ENCODE measurements at regions of chr1 and their contacts with region 1.

Region 1: GRCh38 chr1:146036965-146037646 is 15.6 kb upstream of the HJV start:
- DNase-seq: peak; percentile 95
- H3K4me3 Mint-ChIP-seq: peak overlapping the region; percentile 99
- H3K27ac Mint-ChIP-seq: peak overlapping the region; percentile 98
- H3K4me1 Mint-ChIP-seq: peaks cover 11% of the 10 kb centered on the region
- H3K27me3 Mint-ChIP-seq: no peaks in the 10 kb centered on the region
- CTCF ChIP-seq: no peak

Region 2: DNA sequence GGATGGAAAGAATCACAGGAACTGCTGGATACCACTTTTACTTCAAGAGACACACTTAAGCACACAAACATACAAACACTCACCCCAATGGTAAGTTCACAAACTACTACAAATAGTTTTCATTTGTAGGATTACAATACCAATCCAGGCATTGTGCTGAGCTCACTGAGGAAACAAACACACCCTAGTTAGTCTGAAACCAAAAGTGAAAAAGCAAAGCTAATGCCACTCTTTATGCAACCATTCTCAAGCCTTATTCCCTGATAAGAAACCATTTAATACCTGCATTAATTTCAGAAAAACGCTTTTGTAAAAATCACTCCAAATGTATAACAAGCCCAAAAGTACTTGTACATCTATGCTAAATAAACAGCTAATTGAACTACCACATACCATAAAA is 251.6 kb before region 1 on chr1:
- CTCF ChIA-PET with region 1: no interaction called
- POLR2A ChIA-PET with region 1: no interaction called
- intact Hi-C with region 1: no loop called
- DNase-seq: no peak
- H3K4me3 Mint-ChIP-seq: no peak overlapping the region
- H3K27ac Mint-ChIP-seq: peak overlapping the region; percentile 26
- H3K4me1 Mint-ChIP-seq: peaks cover 46% of the 10 kb centered on the region
- H3K27me3 Mint-ChIP-seq: no peaks in the 10 kb centered on the region
- CTCF ChIP-seq: no peak

Region 3: DNA sequence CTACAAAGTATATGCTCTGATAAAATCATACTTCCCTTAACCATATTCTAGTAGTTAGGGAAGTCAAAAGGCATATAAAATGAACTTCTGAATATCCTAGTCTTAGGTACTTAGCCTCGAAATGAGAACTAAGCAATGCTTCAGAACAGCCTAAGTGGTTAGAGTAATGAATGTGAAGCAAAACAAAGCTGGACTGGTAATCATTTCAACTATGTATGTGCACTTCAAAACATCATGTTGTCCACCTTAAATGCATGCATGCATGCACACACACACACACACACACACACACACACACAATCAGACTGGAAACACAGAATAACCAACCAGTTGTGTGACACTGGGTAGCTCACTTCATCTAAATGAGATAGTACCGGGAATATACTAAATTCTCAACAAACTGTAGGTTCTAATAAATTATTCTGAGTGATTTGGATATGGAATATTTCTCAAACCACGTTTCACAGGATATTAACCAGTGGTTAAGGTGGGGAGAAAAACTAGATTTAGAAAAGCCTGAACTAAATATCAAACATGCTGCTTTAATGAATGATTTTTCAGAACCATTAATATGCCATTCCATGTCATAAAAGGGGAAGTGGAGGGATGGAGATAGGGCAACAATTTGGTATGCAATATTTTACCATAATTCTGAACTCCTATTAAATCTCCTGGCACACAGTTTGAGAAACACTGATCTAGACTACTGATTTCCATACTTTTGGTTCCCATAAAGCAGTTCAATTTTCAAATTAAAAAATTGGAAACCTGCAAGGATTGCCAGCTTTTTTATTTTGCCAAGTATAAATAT is 232.7 kb before region 1 on chr1:
- CTCF ChIA-PET with region 1: no interaction called
- POLR2A ChIA-PET with region 1: no interaction called
- intact Hi-C with region 1: no loop called
- DNase-seq: no peak
- H3K4me3 Mint-ChIP-seq: no peak overlapping the region
- H3K27ac Mint-ChIP-seq: no peak overlapping the region
- H3K4me1 Mint-ChIP-seq: peaks cover 41% of the 10 kb centered on the region
- H3K27me3 Mint-ChIP-seq: no peaks in the 10 kb centered on the region
- CTCF ChIP-seq: no peak

Region 4: GRCh38 chr1:145823565-145824498 is 213.3 kb before region 1 on chr1 and contains the starts of genes POLR3C and RNF115:
- CTCF ChIA-PET with region 1: no interaction called
- POLR2A ChIA-PET with region 1: interaction called, 14 read pairs
- intact Hi-C with region 1: no loop called
- DNase-seq: peak; percentile 95
- H3K4me3 Mint-ChIP-seq: peak within 1 kb of the TSS; percentile 90
- H3K27ac Mint-ChIP-seq: peak within 1 kb of the TSS; percentile 94
- H3K4me1 Mint-ChIP-seq: peaks cover 6% of the 10 kb centered on the region
- H3K27me3 Mint-ChIP-seq: no peaks in the 10 kb centered on the region
- CTCF ChIP-seq: no peak
- total RNA-seq, gene POLR3C: 67.9 and 96.8 TPM in 2 replicates
- total RNA-seq, gene RNF115: 16.8 and 19.5 TPM in 2 replicates

Region 5: DNA sequence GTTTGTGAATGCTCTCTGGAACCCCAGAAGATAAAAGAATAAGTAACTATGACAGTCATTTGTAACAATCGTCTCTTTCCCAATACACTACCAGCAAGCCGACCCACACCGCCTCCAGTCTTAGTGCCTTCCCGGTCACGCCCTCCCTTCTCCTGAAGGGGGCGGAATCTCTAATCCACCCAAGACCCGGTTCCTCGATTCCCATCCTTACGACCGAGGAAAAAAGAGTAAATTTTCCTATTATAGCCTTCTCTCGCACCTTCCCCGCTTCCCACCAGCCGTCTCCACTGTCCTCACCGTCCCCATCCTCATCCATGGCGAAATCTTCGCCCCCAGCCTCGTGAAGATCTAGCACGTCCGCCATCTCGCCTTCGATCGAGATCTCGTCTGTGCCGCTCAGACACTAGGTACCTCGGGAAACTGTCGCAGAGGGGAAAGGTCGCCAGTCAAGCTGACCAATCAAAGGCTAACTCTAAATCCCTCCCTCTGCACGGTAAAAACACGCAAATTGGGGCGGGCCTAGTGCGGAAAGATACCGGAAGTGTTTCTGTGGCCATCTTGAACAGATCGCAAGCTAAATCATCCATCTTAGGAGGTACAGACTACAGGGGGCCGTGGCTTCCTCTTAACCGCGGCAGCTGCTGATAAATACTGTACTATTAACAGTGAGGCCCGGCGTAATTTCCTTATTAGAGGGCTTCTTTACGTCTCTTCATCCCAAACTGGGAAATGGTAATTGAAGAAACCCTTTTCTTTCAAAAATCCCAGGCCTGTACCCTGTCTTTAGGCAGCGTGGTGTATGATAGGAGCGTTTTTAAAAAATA is 109.8 kb before region 1 on chr1 and contains the start of gene RBM8A:
- CTCF ChIA-PET with region 1: no interaction called
- POLR2A ChIA-PET with region 1: interaction called, 23 read pairs
- intact Hi-C with region 1: no loop called
- DNase-seq: peak; percentile 100
- H3K4me3 Mint-ChIP-seq: no peak within 1 kb of the TSS
- H3K27ac Mint-ChIP-seq: no peak within 1 kb of the TSS
- H3K4me1 Mint-ChIP-seq: peaks cover 14% of the 10 kb centered on the region
- H3K27me3 Mint-ChIP-seq: no peaks in the 10 kb centered on the region
- CTCF ChIP-seq: peak; percentile 76
- total RNA-seq, gene RBM8A: 370 and 403 TPM in 2 replicates

Region 6: DNA sequence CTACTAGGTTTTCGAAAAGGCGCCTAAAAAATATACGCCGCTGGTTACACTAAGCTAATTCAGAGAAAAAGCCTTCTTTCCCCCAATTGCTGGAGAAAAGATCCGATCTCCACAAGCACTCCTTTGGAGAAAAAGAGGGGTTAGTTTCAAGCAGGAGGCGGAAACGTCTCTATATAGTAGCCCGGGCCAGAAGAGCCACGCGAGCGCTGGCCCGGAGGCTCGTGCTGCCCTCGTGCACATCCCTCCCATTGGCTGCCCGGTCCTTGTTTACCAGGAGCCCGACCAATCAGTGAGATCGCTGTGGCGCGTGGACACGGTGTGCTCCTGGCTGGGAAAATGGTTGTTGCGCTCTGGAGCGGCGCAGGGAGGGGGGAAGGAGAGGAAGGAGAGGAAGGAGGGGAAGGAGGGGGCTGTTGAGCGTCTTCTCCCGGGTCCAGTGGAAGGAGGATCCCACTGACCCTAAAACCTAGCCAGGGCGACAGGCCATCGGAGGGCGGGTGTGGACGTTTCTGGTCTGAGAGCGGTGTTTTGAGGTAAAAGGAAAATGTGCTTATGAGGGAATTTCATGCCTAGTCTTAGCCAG is 40.6 kb before region 1 on chr1 and contains the start of gene TXNIP:
- CTCF ChIA-PET with region 1: interaction called, 6 read pairs
- POLR2A ChIA-PET with region 1: interaction called, 128 read pairs
- intact Hi-C with region 1: no loop called
- DNase-seq: peak; percentile 99
- H3K4me3 Mint-ChIP-seq: peak within 1 kb of the TSS; percentile 89
- H3K27ac Mint-ChIP-seq: peak within 1 kb of the TSS; percentile 95
- H3K4me1 Mint-ChIP-seq: peaks cover 51% of the 10 kb centered on the region
- H3K27me3 Mint-ChIP-seq: no peaks in the 10 kb centered on the region
- CTCF ChIP-seq: no peak
- total RNA-seq, gene TXNIP: 576 and 599 TPM in 2 replicates

Region 7: GRCh38 chr1:146019231-146020057 is 17.7 kb before region 1 on chr1:
- CTCF ChIA-PET with region 1: interaction called, 70 read pairs
- POLR2A ChIA-PET with region 1: interaction called, 5 read pairs
- intact Hi-C with region 1: no loop called
- DNase-seq: no peak
- H3K4me3 Mint-ChIP-seq: no peak overlapping the region
- H3K27ac Mint-ChIP-seq: no peak overlapping the region
- H3K4me1 Mint-ChIP-seq: peaks cover 5% of the 10 kb centered on the region
- H3K27me3 Mint-ChIP-seq: peaks cover 23% of the 10 kb centered on the region
- CTCF ChIP-seq: no peak

Measured in MCF 10A (cell line).